Left lung (tissue), 14 donors: ENCODE measurements at regions of chr7 and their contacts with region 1.

Region 1: GRCh38 chr7:150420987-150421674 is 29.3 kb upstream of the GIMAP8 start:
- DNase-seq: peak; percentile 66 to 92 (median 79)
- ATAC-seq: peak; percentile 100
- H3K4me3 ChIP-seq: no peak overlapping the region
- H3K27ac ChIP-seq: no peak overlapping the region
- H3K4me1 ChIP-seq: no peaks in the 10 kb centered on the region
- H3K27me3 ChIP-seq: no peaks in the 10 kb centered on the region
- CTCF ChIP-seq: peak; percentile 57 to 90

Region 2: DNA sequence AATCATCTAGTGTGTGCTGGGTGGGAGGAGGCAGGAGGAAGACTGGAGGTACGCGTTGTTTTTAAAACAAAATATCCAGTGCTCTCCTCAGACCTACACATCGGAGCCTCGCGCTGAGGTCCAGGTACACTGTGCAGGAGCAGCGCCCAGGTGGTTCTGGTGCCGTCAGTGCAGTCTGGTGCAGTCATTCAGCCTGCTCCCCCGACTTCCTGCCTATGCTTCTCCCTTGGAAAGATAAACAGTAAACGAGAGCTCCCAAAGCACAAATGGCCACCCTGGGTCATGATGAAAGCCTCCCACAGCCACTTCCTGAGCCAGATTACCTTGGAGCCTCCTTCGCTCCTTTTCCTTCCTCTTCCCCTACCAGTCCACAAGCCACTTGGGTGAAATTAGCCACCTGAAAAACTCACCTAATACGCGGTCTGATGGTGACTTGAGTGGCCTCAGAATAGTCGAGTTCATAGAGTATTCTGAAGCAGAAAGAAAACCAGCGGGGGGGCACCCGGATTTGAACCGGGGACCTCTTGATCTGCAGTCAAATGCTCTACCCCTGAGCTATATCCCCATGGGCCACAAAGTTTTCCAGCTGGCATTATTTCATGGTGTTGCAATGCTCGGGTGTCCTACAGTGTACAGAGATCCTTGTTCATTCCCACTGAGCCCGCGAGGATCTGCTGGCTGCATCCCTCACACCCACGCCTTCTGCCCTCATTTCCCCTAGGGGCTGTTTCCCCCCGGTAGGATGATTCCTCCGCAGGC is 730.3 kb before region 1 on chr7:
- intact Hi-C with region 1: no loop called
- DNase-seq: peak in 1 of 4 donors; percentile 40
- ATAC-seq: peak; percentile 48
- H3K4me3 ChIP-seq: no peak overlapping the region
- H3K27ac ChIP-seq: no peak overlapping the region
- H3K4me1 ChIP-seq: no peaks in the 10 kb centered on the region
- H3K27me3 ChIP-seq: peaks cover 28 to 69% of the 10 kb centered on the region in 2 donors
- CTCF ChIP-seq: no peak

Region 3: GRCh38 chr7:150356265-150356897 is 64.8 kb before region 1 on chr7:
- intact Hi-C with region 1: loop called in 1 of 2 experiments (anchors 10 kb)
- DNase-seq: no peak
- ATAC-seq: peak; percentile 33
- H3K4me3 ChIP-seq: no peak overlapping the region
- H3K27ac ChIP-seq: no peak overlapping the region
- H3K4me1 ChIP-seq: no peaks in the 10 kb centered on the region
- H3K27me3 ChIP-seq: no peaks in the 10 kb centered on the region
- CTCF ChIP-seq: peak; percentile 37 to 49